ENCODE measurements at regions of chr3 and their contacts with region 1.

Region 1: DNA sequence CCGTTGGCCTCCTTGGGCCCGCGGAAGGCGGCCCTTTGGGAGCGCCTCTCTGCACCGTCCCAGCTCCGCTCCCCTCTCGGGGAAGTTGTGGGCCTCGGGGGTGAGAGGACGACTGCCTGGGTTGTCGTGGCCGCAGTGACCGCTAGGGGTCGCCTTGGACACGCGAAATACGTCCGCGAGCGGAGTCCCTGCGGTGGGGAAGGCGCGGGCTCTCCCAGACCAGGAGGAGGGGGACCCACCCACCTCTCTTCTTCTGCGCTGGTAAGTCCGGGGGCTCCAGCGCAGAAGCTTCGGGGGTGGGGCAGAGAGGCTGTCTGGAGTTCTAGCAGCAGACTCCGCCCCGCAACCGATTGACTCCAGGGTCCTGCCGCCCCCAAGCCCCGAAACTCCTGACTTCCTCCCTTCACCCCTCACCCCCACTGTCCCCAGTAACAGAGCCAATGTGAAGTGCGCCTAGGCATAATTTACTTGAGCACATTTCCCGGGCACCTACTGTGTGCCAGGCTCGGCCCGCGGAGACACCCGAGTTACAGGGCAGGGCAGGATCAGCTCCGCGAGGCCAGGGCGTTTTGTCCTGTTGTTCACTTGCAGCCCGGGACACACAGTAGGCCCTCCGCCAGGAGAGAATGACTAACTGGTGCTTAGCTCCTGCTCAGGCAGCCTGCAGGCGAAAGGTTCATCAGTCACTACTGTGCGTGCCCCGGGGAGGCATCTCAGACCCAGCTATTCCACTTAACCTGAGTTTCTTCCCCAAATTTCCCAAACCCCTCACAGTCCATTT is 32.8 kb downstream of the DNASE1L3 start:
- DNase-seq: peak; percentile 97
- H3K4me3 ChIP-seq: peak overlapping the region; percentile 53 to 64 (median 56)
- H3K27ac ChIP-seq: peak overlapping the region in 3 of 4 donors; percentile 27 to 60 (median 44)
- H3K4me1 ChIP-seq: peaks cover 39 to 56% (median 52%) of the 10 kb centered on the region in 4 donors
- H3K27me3 ChIP-seq: no peaks in the 10 kb centered on the region
- CTCF ChIP-seq: peak; percentile 93 to 98 (median 93)
- EP300 ChIP-seq: no peak
- POLR2A ChIP-seq: no peak

Region 2: GRCh38 chr3:57877116-57877515 is 300.8 kb before region 1 on chr3:
- intact Hi-C with region 1: loop called (anchors 10 kb)
- DNase-seq: no peak
- H3K4me3 ChIP-seq: no peak overlapping the region
- H3K27ac ChIP-seq: peak overlapping the region in 3 of 4 donors; percentile 3 to 66 (median 44)
- H3K4me1 ChIP-seq: peaks cover 0 to 23% (median 13%) of the 10 kb centered on the region in 4 donors
- H3K27me3 ChIP-seq: no peaks in the 10 kb centered on the region
- CTCF ChIP-seq: no peak
- EP300 ChIP-seq: no peak
- POLR2A ChIP-seq: no peak

Region 3: DNA sequence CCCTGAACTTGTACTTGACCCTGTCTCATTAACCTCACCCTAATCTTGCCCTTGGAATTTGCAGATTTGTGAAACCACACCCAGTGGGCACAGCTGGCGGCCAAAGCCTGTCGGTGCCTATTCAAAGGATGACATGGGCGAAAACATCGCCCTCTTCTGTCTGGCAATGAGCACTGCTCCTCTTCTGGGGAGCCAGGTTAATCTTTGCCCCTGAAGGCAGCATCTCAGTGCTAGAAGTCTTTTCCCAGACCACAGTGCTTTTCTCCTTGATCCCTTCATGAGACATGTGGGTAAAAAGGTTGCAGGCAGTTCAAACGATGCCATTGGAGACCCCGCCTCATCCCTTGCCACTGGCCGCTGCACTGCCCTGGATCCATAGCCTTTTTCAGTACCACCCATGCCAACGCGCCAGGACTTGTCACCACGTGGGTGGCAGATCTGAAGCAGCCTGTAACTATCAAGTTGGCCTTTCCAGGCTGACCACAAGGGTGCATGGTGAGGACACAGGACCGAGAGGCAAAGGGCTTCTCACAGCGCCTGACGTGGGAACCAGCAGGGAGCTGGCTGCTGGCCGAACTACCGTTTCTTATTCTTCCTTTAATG is 39.4 kb after region 1 on chr3:
- intact Hi-C with region 1: loop called (anchors 5 kb)
- DNase-seq: no peak
- H3K4me3 ChIP-seq: no peak overlapping the region
- H3K27ac ChIP-seq: peak overlapping the region in 1 of 4 donors; percentile 40
- H3K4me1 ChIP-seq: peaks cover 12 to 21% (median 14%) of the 10 kb centered on the region in 4 donors
- H3K27me3 ChIP-seq: no peaks in the 10 kb centered on the region
- CTCF ChIP-seq: peak; percentile 69 to 82 (median 75)
- EP300 ChIP-seq: no peak
- POLR2A ChIP-seq: no peak